ENCODE measurements at regions of chr14 and their contacts with region 1.

Region 1: DNA sequence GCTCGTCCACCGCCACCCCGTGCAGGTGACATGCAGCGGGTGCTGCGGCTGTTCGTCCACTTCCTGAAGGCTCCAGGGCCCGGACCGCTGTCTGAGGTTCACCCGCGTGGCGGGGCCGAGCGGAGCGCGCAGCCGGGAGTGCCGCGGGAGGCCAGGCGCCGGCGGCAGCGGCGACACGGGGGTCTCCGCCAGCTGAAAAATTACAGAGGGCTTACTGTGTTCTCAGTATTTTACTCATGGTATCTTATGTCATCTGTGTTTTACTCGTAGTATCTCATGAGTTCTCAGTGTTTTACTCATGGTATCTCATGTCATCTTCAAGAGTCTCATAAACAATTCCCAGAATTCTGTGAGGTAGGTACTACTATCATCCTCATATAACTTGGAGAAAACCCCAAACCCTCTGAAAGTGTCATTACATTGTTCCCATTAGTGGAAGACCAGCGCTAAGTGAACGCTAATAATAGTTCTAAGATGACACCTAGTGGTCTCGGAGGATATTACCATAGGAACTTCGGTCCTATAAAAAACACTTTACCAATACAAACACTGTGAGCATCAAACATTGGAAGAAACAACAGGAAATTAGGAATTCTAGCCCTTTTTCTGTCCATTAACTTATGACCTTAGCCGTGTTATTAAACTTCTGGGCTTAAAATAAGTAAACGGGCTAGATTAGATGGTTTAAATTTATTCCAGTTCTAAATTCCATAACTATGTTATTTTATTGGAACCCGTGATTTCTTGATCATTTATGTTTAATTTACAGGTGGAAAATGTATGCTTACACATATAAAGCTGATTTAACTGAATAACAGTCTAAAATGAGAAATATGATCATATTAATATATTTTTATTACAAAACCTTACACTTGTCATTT is 32.4 kb downstream of the AK7 start:
- DNase-seq: no peak
- H3K4me3 ChIP-seq: peak overlapping the region; percentile 36 to 45
- H3K27ac ChIP-seq: no peak overlapping the region
- H3K4me1 ChIP-seq: peaks cover 6% of the 10 kb centered on the region
- H3K27me3 ChIP-seq: no peaks in the 10 kb centered on the region
- CTCF ChIP-seq: peak; percentile 50 to 86 (median 85)
- POLR2A ChIP-seq: no peak

Region 2: GRCh38 chr14:96297000-96297399 is 127.3 kb before region 1 on chr14:
- intact Hi-C with region 1: loop called (anchors 10 kb)
- DNase-seq: no peak
- H3K4me3 ChIP-seq: no peak overlapping the region
- H3K27ac ChIP-seq: no peak overlapping the region
- H3K4me1 ChIP-seq: no peaks in the 10 kb centered on the region
- H3K27me3 ChIP-seq: no peaks in the 10 kb centered on the region
- CTCF ChIP-seq: peak in 2 of 3 experiments; percentile 31 to 35
- POLR2A ChIP-seq: no peak